ENCODE measurements at regions of chr18 and their contacts with region 1.

Region 1: DNA sequence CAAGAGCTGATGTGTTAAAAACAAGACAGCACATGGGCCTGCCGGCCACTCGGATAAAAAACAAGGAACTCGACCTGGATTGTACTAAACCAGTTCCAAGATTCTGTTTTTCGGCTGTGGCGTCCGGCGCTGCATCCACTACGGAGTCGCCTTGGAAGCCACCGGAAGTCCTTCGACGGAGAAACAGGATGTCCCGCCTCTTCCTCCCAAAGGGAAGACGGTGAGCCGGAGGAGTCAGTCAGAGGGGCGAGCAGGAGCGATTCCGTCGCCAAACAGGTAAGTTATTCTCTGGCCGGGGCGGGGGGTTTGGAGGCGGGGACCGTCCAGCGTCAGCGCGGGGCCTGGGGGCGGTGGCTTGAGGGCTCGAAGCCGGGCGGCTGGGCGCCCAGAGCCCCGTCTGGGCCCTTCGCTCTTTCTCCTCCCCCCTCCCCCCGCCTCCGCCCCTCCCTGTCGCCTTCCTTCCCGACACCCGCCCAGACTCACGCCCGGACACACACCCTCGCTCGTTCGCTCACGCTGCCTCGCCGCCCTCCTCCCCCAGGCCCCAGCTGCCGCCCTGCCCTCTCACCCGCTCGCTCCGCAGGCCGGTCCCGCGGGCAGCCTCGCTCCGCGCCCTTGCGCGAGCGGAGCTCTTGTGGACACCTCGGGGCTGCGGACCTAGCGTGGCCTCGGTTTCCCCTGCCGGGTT is at the start of gene ZNF407:
- DNase-seq: peak; percentile 89 to 94 (median 92)
- H3K4me3 ChIP-seq: peak within 1 kb of the TSS; percentile 98 to 99
- H3K4me3 Mint-ChIP-seq: peak within 1 kb of the TSS; percentile 94 to 99 (median 96)
- H3K27ac ChIP-seq: peak within 1 kb of the TSS; percentile 93
- H3K27ac Mint-ChIP-seq: peak within 1 kb of the TSS; percentile 98 to 99 (median 99)
- H3K4me1 ChIP-seq: peaks cover 42% of the 10 kb centered on the region
- H3K4me1 Mint-ChIP-seq: peaks cover 35 to 71% (median 46%) of the 10 kb centered on the region in 4 donors
- H3K27me3 ChIP-seq: no peaks in the 10 kb centered on the region
- H3K27me3 Mint-ChIP-seq: no peaks in the 10 kb centered on the region
- total RNA-seq, gene ZNF407: 25.8 to 26.9 TPM

Region 2: GRCh38 chr18:74291771-74292540 is 305.9 kb before region 1 on chr18 and contains the start of gene CYB5A:
- CTCF ChIA-PET with region 1: no interaction called
- POLR2A ChIA-PET with region 1: no interaction called
- intact Hi-C with region 1: loop called (anchors 1 kb)
- DNase-seq: peak; percentile 97 to 99 (median 98)
- H3K4me3 ChIP-seq: peak within 1 kb of the TSS; percentile 90 to 98
- H3K4me3 Mint-ChIP-seq: peak within 1 kb of the TSS in 3 of 8 donors; percentile 95 to 99 (median 96)
- H3K27ac ChIP-seq: peak within 1 kb of the TSS; percentile 74
- H3K27ac Mint-ChIP-seq: peak within 1 kb of the TSS; percentile 65 to 98 (median 88)
- H3K4me1 ChIP-seq: peaks cover 13% of the 10 kb centered on the region
- H3K4me1 Mint-ChIP-seq: peaks cover 6 to 20% (median 11%) of the 10 kb centered on the region in 4 donors
- H3K27me3 ChIP-seq: no peaks in the 10 kb centered on the region
- H3K27me3 Mint-ChIP-seq: no peaks in the 10 kb centered on the region
- total RNA-seq, gene CYB5A: 22.8 to 27.0 TPM

Region 3: DNA sequence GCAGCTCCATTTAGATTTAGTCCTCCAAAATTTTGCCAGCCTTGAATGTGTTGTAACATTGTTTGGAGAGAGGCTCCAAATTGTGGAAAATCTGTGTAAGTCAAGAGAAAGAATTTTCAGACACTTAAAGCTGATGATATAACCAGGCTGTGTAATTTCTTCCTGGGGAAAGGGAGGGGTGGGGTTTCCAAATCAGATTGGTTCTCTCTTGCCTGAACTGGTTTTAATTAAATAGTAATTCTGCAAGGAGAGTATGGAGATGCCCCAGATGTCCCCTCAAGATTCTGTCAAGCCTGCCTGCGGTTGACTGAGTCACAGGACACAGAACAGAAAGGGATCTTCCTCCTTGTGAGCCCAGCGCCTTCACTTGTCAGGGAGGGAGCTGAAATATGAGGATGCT is 227.7 kb before region 1 on chr18:
- CTCF ChIA-PET with region 1: no interaction called
- POLR2A ChIA-PET with region 1: interaction called, 7 read pairs
- intact Hi-C with region 1: loop called (anchors 5 kb)
- DNase-seq: no peak
- H3K4me3 ChIP-seq: no peak overlapping the region
- H3K4me3 Mint-ChIP-seq: no peak overlapping the region
- H3K27ac ChIP-seq: no peak overlapping the region
- H3K27ac Mint-ChIP-seq: peak overlapping the region in 5 of 7 donors; percentile 25 to 89 (median 77)
- H3K4me1 ChIP-seq: peaks cover 34% of the 10 kb centered on the region
- H3K4me1 Mint-ChIP-seq: peaks cover 29 to 49% (median 39%) of the 10 kb centered on the region in 4 donors
- H3K27me3 ChIP-seq: no peaks in the 10 kb centered on the region
- H3K27me3 Mint-ChIP-seq: peaks cover 7 to 8% of the 10 kb centered on the region in 2 donors

Region 4: GRCh38 chr18:74609535-74609934 is 11.7 kb after region 1 on chr18:
- CTCF ChIA-PET with region 1: no interaction called
- POLR2A ChIA-PET with region 1: interaction called, 11 read pairs
- intact Hi-C with region 1: no loop called
- DNase-seq: no peak
- H3K4me3 ChIP-seq: no peak overlapping the region
- H3K4me3 Mint-ChIP-seq: no peak overlapping the region
- H3K27ac ChIP-seq: no peak overlapping the region
- H3K27ac Mint-ChIP-seq: no peak overlapping the region
- H3K4me1 ChIP-seq: peaks cover 14% of the 10 kb centered on the region
- H3K4me1 Mint-ChIP-seq: peaks cover 25 to 41% (median 34%) of the 10 kb centered on the region in 4 donors
- H3K27me3 ChIP-seq: no peaks in the 10 kb centered on the region
- H3K27me3 Mint-ChIP-seq: no peaks in the 10 kb centered on the region

Region 5: DNA sequence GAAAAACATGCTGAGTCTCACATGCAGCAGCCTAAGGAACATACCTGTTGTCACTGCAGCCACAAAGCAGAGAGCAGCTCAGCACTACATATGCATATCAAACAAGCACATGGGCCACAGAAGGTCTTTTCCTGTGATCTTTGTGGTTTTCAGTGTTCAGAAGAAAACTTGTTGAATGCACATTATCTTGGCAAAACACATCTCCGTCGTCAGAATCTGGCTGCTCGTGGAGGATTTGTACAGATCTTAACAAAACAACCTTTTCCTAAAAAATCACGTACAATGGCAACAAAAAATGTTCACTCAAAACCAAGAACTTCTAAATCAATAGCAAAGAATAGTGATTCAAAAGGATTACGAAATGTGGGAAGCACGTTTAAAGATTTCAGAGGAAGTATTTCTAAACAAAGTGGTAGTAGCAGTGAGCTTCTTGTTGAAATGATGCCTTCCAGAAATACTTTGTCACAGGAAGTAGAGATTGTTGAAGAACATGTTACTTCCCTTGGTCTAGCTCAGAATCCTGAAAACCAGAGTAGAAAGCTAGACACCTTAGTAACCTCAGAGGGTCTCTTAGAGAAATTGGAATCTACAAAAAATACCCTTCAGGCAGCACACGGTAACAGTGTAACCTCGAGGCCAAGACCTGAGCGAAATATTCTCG is 33.9 kb after region 1 on chr18:
- CTCF ChIA-PET with region 1: interaction called, 10 read pairs
- POLR2A ChIA-PET with region 1: interaction called, 56 read pairs
- intact Hi-C with region 1: loop called (anchors 2 kb)
- DNase-seq: peak in 4 of 5 donors; percentile 36 to 46 (median 44)
- H3K4me3 ChIP-seq: peak overlapping the region in 1 of 2 donors; percentile 30
- H3K4me3 Mint-ChIP-seq: peak overlapping the region; percentile 62 to 90 (median 84)
- H3K27ac ChIP-seq: peak overlapping the region; percentile 35
- H3K27ac Mint-ChIP-seq: peak overlapping the region; percentile 81 to 97 (median 93)
- H3K4me1 ChIP-seq: peaks cover 44% of the 10 kb centered on the region
- H3K4me1 Mint-ChIP-seq: peaks cover 30 to 50% (median 44%) of the 10 kb centered on the region in 4 donors
- H3K27me3 ChIP-seq: no peaks in the 10 kb centered on the region
- H3K27me3 Mint-ChIP-seq: no peaks in the 10 kb centered on the region

Region 6: DNA sequence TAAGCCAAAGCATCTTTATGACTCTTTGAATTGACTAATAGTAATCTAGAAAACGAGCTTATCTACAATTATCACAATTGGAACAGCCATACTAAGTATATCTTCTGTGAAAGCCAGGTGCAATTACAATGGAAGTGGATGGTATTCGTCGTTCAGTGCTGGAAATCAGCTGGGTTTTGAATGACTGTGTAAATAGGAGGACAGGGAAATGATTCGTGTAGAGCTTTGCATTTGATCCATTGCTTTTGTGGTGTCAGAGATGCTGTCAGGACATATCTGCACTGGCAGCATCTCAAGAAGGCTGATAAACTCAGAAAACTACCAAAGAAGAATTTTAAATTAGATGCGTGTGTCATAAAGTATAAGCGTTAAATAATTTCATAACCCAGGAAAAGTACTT is 186.9 kb after region 1 on chr18:
- CTCF ChIA-PET with region 1: no interaction called
- POLR2A ChIA-PET with region 1: no interaction called
- intact Hi-C with region 1: no loop called
- DNase-seq: no peak
- H3K4me3 ChIP-seq: no peak overlapping the region
- H3K4me3 Mint-ChIP-seq: no peak overlapping the region
- H3K27ac ChIP-seq: no peak overlapping the region
- H3K27ac Mint-ChIP-seq: peak overlapping the region in 1 of 7 donors; percentile 21
- H3K4me1 ChIP-seq: no peaks in the 10 kb centered on the region
- H3K4me1 Mint-ChIP-seq: peaks cover 0 to 4% (median 0%) of the 10 kb centered on the region in 4 donors
- H3K27me3 ChIP-seq: no peaks in the 10 kb centered on the region
- H3K27me3 Mint-ChIP-seq: no peaks in the 10 kb centered on the region

Region 7: DNA sequence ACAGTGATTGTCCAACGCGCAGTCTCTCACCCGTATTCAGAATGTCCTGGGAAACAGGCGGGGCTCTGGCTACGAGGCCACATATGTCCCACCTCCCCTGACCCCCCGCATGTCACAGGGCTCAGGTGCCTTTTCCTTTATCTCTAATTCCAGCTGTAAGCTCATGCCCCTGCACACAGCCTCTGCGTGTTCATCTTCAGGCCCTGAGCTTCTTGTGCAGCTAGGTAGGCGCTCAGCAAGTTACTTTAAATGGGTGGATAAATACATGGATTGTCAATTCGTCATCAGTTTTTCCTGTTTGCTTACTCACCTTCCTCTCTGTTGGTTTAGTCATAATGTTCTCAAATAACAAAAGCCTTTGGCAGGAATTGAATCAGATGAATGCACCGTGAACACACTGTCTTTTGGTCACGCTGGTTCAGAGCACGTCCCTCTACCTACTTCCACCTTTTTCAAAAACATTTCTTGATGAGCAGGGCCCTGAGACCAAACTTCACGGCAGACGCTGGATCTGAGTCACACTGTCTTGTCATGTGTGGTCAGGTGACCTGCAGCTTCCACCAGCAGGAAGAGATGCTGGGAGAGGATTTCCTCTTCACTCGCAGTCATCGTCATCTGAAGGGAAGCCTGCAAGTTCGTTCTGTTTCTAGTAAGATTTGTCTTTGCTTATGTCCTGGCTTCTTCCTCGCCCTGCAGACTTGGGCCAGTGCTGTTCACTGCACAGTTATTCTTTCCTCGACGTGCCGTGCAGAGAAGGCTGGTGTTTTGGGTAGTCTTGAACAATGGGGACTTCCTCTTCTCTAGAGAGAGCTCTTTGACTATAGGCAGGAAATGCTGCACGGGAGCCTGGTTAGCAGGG is 473.0 kb after region 1 on chr18:
- CTCF ChIA-PET with region 1: interaction called, 3 read pairs
- POLR2A ChIA-PET with region 1: interaction called, 13 read pairs
- intact Hi-C with region 1: loop called (anchors 1 kb)
- DNase-seq: peak; percentile 70 to 89 (median 74)
- H3K4me3 ChIP-seq: peak overlapping the region; percentile 51 to 58
- H3K4me3 Mint-ChIP-seq: peak overlapping the region; percentile 79 to 97 (median 90)
- H3K27ac ChIP-seq: peak overlapping the region; percentile 74
- H3K27ac Mint-ChIP-seq: peak overlapping the region; percentile 89 to 100 (median 99)
- H3K4me1 ChIP-seq: peaks cover 34% of the 10 kb centered on the region
- H3K4me1 Mint-ChIP-seq: peaks cover 35 to 57% (median 41%) of the 10 kb centered on the region in 4 donors
- H3K27me3 ChIP-seq: no peaks in the 10 kb centered on the region
- H3K27me3 Mint-ChIP-seq: no peaks in the 10 kb centered on the region

Region 8: GRCh38 chr18:75209129-75209950 is 611.5 kb after region 1 on chr18 and contains the start of gene PTGR3:
- CTCF ChIA-PET with region 1: interaction called, 3 read pairs
- POLR2A ChIA-PET with region 1: interaction called, 6 read pairs
- intact Hi-C with region 1: loop called (anchors 1 kb)
- DNase-seq: peak; percentile 78 to 89 (median 80)
- H3K4me3 ChIP-seq: peak within 1 kb of the TSS; percentile 91 to 96
- H3K4me3 Mint-ChIP-seq: peak within 1 kb of the TSS; percentile 96 to 100 (median 100)
- H3K27ac ChIP-seq: peak within 1 kb of the TSS; percentile 80
- H3K27ac Mint-ChIP-seq: peak within 1 kb of the TSS; percentile 93 to 99 (median 97)
- H3K4me1 ChIP-seq: peaks cover 62% of the 10 kb centered on the region
- H3K4me1 Mint-ChIP-seq: peaks cover 46 to 73% (median 56%) of the 10 kb centered on the region in 4 donors
- H3K27me3 ChIP-seq: no peaks in the 10 kb centered on the region
- H3K27me3 Mint-ChIP-seq: peaks cover 0 to 2% of the 10 kb centered on the region in 2 donors
- total RNA-seq, gene PTGR3: 55.9 to 56.7 TPM